ENCODE measurements at regions of chr18 and their contacts with region 1.

Region 1: DNA sequence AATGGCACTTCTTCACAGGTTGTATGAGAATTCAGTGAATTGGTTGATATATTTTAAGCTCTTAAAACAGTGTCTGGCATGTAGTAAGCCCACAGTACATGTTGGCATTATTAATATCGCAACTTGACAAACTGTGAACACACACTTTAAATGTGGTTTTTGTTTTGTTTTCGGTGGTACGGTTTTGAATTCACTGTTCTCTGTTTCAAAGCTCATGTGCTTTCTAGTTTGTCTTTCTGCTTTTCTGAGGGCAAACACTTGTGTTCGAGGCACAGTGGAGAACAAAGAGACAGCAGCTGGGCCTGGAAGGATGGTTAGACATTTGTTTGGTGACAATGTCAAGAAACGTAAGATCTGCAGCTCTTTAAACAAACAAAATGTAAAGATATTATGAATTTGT is 276.5 kb upstream of the MC4R start:
- DNase-seq: no peak
- ATAC-seq: no peak
- H3K4me3 Mint-ChIP-seq: no peak overlapping the region
- H3K27ac Mint-ChIP-seq: no peak overlapping the region
- H3K4me1 Mint-ChIP-seq: no peaks in the 10 kb centered on the region
- H3K27me3 Mint-ChIP-seq: no peaks in the 10 kb centered on the region

Region 2: DNA sequence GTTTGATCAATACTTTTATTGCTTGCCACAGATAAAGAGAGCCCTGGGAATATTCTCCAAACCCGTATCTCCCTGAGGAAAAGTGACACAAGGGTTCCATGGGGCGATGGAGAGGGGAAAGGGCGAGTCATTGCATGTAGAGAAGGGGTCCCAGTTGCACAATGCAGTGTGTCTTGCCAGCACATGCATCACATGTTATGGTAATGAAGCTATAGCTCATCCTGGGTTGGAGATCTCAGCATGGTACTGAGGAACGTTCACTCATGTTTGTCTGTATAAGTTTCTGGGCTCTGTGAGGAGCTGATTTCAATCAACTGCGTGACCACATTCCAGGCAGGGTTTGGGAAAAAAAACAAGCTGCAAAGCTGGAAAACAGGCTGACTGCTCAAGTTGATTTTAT is 55.9 kb before region 1 on chr18:
- CTCF ChIA-PET with region 1: no interaction called
- POLR2A ChIA-PET with region 1: no interaction called
- intact Hi-C with region 1: loop called in 1 of 2 experiments (anchors 5 kb)
- DNase-seq: no peak
- ATAC-seq: no peak
- H3K4me3 Mint-ChIP-seq: no peak overlapping the region
- H3K27ac Mint-ChIP-seq: no peak overlapping the region
- H3K4me1 Mint-ChIP-seq: no peaks in the 10 kb centered on the region
- H3K27me3 Mint-ChIP-seq: no peaks in the 10 kb centered on the region

Region 3: GRCh38 chr18:60966876-60967275 is 317.8 kb after region 1 on chr18:
- CTCF ChIA-PET with region 1: no interaction called
- POLR2A ChIA-PET with region 1: no interaction called
- intact Hi-C with region 1: no loop called
- DNase-seq: no peak
- ATAC-seq: no peak
- H3K4me3 Mint-ChIP-seq: no peak overlapping the region
- H3K27ac Mint-ChIP-seq: no peak overlapping the region
- H3K4me1 Mint-ChIP-seq: no peaks in the 10 kb centered on the region
- H3K27me3 Mint-ChIP-seq: no peaks in the 10 kb centered on the region